ENCODE measurements at regions of chr5 and their contacts with region 1.

Region 1: DNA sequence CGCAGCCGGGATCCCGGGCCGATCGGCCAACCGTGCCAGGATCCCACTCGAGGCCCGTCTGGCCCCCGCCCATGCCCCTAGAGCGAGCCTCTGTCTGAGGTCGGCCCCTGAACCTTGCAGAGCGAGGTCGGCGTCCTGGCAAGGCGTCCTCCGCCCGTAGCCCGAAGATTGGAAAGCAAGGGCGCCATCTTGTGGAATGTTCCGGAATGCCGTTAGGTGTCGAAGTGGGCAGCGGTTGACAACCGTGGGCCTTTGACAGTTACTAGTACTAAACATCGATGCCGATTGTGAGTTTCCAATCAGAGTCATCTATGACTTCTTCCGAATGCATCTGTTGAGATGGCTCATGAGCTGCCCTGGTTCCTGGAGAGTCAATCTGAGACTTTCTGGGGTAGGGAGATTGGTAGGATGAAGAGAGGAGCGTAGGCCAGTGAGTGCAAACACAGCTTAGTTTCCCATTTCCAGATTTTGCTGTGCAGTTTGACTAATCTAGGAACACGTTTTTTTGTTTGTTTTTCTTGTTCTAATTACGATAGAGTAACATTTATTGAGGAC is 923 bp upstream of the PLK2 start:
- DNase-seq: peak; percentile 86 to 91 (median 87)
- H3K4me3 ChIP-seq: peak overlapping the region; percentile 1 to 80
- H3K4me3 Mint-ChIP-seq: peak overlapping the region; percentile 77 to 90 (median 88)
- H3K27ac ChIP-seq: peak overlapping the region; percentile 83
- H3K27ac Mint-ChIP-seq: peak overlapping the region; percentile 70 to 95 (median 88)
- H3K4me1 ChIP-seq: peaks cover 12% of the 10 kb centered on the region
- H3K4me1 Mint-ChIP-seq: peaks cover 3 to 16% (median 14%) of the 10 kb centered on the region in 4 donors
- H3K27me3 ChIP-seq: peaks cover 8% of the 10 kb centered on the region
- H3K27me3 Mint-ChIP-seq: peaks cover 0 to 4% of the 10 kb centered on the region in 2 donors

Region 2: DNA sequence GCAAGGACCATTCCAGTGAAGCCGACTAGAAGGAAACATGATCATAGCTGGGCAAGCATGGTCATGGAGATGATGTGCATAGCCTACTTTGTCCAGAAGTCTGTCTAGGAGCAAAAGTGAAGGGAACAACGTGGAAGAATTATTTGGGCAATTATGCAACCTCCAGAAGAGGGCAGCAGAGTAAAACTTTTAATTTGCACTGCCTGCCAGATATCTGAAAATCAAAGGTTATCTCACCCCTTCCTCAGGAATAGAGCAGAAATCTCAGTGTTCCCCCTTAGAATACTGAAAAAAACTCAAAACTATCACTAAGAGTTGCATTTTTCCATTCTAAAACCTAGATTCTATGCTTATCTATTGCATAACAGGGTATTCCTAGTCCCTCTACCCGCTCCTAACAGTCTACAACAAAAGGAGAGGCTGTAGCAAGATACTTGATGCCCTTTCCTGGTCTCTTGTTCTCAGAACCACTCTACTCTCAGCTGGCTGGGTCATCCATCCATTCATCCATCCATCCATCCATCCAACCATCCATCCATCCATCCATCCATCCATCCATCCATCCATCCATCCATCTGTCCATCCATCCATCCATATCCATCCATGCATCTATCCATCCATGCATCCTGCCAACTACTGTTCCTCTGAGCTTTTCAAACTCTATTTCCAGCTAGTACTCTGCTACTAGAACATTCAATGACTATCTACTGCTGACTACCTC is 1559.8 kb before region 1 on chr5:
- CTCF ChIA-PET with region 1: interaction called, 3 read pairs
- POLR2A ChIA-PET with region 1: no interaction called
- intact Hi-C with region 1: loop called (anchors 2 kb)
- DNase-seq: peak in 4 of 5 donors; percentile 43 to 64 (median 54)
- H3K4me3 ChIP-seq: no peak overlapping the region
- H3K4me3 Mint-ChIP-seq: no peak overlapping the region
- H3K27ac ChIP-seq: no peak overlapping the region
- H3K27ac Mint-ChIP-seq: no peak overlapping the region
- H3K4me1 ChIP-seq: no peaks in the 10 kb centered on the region
- H3K4me1 Mint-ChIP-seq: peaks cover 2 to 6% (median 4%) of the 10 kb centered on the region in 4 donors
- H3K27me3 ChIP-seq: no peaks in the 10 kb centered on the region
- H3K27me3 Mint-ChIP-seq: no peaks in the 10 kb centered on the region

Region 3: DNA sequence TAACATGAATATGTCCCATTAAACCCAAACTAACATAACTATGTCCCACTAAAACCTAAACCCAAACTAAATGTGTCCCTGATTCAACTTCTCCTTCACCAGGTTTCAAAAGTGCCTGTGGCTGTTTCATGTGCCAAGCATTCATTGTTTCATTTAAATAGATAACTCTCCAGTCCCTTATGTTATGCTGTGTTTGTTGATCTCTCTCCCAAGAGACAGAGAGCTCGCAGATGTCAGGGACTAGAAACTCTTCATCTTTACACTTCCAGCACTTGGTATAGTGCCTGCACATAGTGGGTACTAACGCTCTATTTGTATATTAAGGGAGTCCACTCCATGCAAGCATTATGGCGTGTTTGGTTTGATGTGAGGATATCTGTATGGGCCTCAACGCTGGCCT is 1168.9 kb before region 1 on chr5:
- CTCF ChIA-PET with region 1: interaction called, 176 read pairs
- POLR2A ChIA-PET with region 1: no interaction called
- intact Hi-C with region 1: no loop called
- DNase-seq: no peak
- H3K4me3 ChIP-seq: no peak overlapping the region
- H3K4me3 Mint-ChIP-seq: no peak overlapping the region
- H3K27ac ChIP-seq: no peak overlapping the region
- H3K27ac Mint-ChIP-seq: no peak overlapping the region
- H3K4me1 ChIP-seq: no peaks in the 10 kb centered on the region
- H3K4me1 Mint-ChIP-seq: no peaks in the 10 kb centered on the region
- H3K27me3 ChIP-seq: no peaks in the 10 kb centered on the region
- H3K27me3 Mint-ChIP-seq: peaks cover 2 to 3% of the 10 kb centered on the region in 2 donors

Region 4: DNA sequence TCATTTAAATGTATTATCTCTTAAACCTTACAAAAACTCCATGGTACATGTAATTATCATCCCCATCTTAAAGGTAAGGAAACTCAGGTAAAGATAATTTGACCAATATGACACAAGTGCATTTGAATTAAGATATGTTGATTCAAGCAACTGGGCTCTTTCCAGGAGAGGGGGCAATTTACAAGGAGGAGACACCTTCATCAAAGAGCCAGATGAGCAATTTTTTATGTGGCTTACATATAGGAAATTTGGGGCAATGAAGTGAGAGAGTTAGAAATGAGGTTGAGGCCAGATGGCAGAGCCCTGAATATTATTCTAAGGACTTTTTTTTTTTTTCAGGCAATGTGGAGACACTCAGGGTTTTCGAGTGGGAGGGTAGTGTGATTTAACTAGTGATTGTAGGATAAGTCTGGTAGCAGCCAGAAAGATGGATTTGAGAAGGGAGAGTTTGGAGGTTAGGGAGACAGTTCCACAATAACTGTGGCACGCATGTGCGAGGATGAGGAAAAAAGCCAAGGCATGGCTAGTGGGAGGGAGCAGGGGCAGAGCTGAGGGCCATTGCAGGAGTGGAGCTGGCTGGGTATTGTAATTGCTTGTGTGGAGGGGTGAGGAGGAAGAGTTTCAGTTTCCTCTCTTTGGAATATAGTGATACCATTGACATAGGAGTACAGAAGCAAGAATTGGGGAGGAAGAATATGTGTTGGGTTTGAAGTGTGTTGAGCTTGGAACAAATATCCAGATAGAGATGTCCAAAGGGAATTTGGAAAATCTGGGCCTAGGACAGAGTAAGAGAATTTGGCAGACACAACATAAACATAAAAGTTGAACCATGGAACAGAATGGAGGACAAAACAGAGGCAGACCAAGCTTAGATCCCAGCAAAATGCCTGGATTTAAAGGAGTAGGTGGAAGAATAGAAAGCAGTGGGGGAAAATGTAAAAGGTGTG is 1050.2 kb before region 1 on chr5:
- CTCF ChIA-PET with region 1: interaction called, 3 read pairs
- POLR2A ChIA-PET with region 1: no interaction called
- intact Hi-C with region 1: loop called (anchors 1 kb)
- DNase-seq: no peak
- H3K4me3 ChIP-seq: no peak overlapping the region
- H3K4me3 Mint-ChIP-seq: no peak overlapping the region
- H3K27ac ChIP-seq: no peak overlapping the region
- H3K27ac Mint-ChIP-seq: no peak overlapping the region
- H3K4me1 ChIP-seq: no peaks in the 10 kb centered on the region
- H3K4me1 Mint-ChIP-seq: no peaks in the 10 kb centered on the region
- H3K27me3 ChIP-seq: no peaks in the 10 kb centered on the region
- H3K27me3 Mint-ChIP-seq: peaks cover 0 to 2% of the 10 kb centered on the region in 2 donors

Region 5: GRCh38 chr5:57650360-57651069 is 810.3 kb before region 1 on chr5:
- CTCF ChIA-PET with region 1: interaction called, 30 read pairs
- POLR2A ChIA-PET with region 1: interaction called, 4 read pairs
- intact Hi-C with region 1: loop called (anchors 1 kb)
- DNase-seq: peak in 4 of 5 donors; percentile 2 to 29 (median 10)
- H3K4me3 ChIP-seq: no peak overlapping the region
- H3K4me3 Mint-ChIP-seq: no peak overlapping the region
- H3K27ac ChIP-seq: no peak overlapping the region
- H3K27ac Mint-ChIP-seq: no peak overlapping the region
- H3K4me1 ChIP-seq: no peaks in the 10 kb centered on the region
- H3K4me1 Mint-ChIP-seq: no peaks in the 10 kb centered on the region
- H3K27me3 ChIP-seq: no peaks in the 10 kb centered on the region
- H3K27me3 Mint-ChIP-seq: peaks cover 7 to 10% of the 10 kb centered on the region in 2 donors

Region 6: GRCh38 chr5:58484505-58484904 is 23.7 kb after region 1 on chr5:
- CTCF ChIA-PET with region 1: no interaction called
- POLR2A ChIA-PET with region 1: no interaction called
- intact Hi-C with region 1: no loop called
- DNase-seq: no peak
- H3K4me3 ChIP-seq: no peak overlapping the region
- H3K4me3 Mint-ChIP-seq: no peak overlapping the region
- H3K27ac ChIP-seq: no peak overlapping the region
- H3K27ac Mint-ChIP-seq: no peak overlapping the region
- H3K4me1 ChIP-seq: no peaks in the 10 kb centered on the region
- H3K4me1 Mint-ChIP-seq: no peaks in the 10 kb centered on the region
- H3K27me3 ChIP-seq: no peaks in the 10 kb centered on the region
- H3K27me3 Mint-ChIP-seq: peaks cover 5 to 6% of the 10 kb centered on the region in 2 donors

Region 7: GRCh38 chr5:59039296-59040023 is 578.7 kb after region 1 on chr5:
- CTCF ChIA-PET with region 1: no interaction called
- POLR2A ChIA-PET with region 1: no interaction called
- intact Hi-C with region 1: loop called (anchors 1 kb)
- DNase-seq: peak; percentile 90 to 94 (median 91)
- H3K4me3 ChIP-seq: peak overlapping the region; percentile 84 to 93
- H3K4me3 Mint-ChIP-seq: peak overlapping the region; percentile 89 to 98 (median 96)
- H3K27ac ChIP-seq: peak overlapping the region; percentile 81
- H3K27ac Mint-ChIP-seq: peak overlapping the region; percentile 96 to 99 (median 99)
- H3K4me1 ChIP-seq: peaks cover 64% of the 10 kb centered on the region
- H3K4me1 Mint-ChIP-seq: peaks cover 39 to 79% (median 53%) of the 10 kb centered on the region in 4 donors
- H3K27me3 ChIP-seq: no peaks in the 10 kb centered on the region
- H3K27me3 Mint-ChIP-seq: no peaks in the 10 kb centered on the region

Measured in CD4-positive, alpha-beta memory T cell (primary cell).